Activated CD4-positive, alpha-beta T cell treated with anti-CD3 and anti-CD28 coated beads, Interleukin-2, amount 10 ng/mL, durations not matched to agents 24 days and 14 days (primary cell): ENCODE measurements at regions of chr3 and their contacts with region 1.

Region 1: DNA sequence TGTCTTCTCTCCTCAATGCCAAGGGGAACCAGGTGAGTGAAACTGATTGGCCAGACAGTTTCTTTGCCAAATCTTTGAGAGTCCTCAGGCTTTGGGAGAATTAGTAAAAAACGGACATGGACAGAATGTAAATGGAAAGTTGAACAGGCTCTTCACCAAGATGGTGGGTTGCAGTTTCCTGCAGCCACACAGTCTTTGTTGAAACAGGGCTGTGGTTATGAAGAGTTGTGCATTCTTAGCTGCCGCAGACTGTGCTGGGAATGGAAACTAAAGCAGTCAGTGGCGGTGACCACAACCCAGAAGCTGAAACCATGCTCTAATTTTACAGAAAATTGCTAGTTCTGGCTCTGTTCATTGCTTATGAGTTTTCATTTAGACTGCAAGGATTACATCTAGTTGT is 42.1 kb upstream of the TASOR start:
- DNase-seq: peak; percentile 92
- H3K4me3 Mint-ChIP-seq: peak overlapping the region; percentile 79
- H3K27ac Mint-ChIP-seq: peak overlapping the region; percentile 79
- H3K4me1 Mint-ChIP-seq: peaks cover 52% of the 10 kb centered on the region
- H3K27me3 Mint-ChIP-seq: no peaks in the 10 kb centered on the region

Region 2: GRCh38 chr3:56753206-56753820 is 28.1 kb after region 1 on chr3:
- intact Hi-C with region 1: loop called (anchors 1 kb)
- DNase-seq: peak; percentile 82
- H3K4me3 Mint-ChIP-seq: peak overlapping the region; percentile 67
- H3K27ac Mint-ChIP-seq: peak overlapping the region; percentile 80
- H3K4me1 Mint-ChIP-seq: peaks cover 62% of the 10 kb centered on the region
- H3K27me3 Mint-ChIP-seq: no peaks in the 10 kb centered on the region

Region 3: DNA sequence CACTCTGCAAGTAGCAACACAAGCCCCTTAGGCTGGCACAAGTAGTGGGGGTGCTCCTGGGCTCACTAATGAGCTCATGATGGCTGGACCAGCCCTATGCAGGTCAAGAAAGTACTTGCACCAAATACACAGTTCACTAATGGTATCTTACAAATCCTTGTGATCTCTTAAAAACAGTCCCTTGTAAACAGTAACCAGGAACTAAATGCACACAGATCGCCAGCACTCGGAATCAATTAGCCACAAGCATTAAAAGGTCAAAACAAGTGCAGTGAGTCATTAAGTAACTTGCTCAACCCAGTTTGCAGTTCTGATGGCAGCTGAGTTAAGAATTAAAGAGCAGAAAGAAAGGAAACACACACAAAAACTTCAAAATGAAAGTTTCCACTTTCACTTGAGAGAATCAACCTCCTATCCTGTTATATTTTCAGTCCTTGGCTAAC is 33.4 kb after region 1 on chr3:
- intact Hi-C with region 1: loop called (anchors 1 kb)
- DNase-seq: peak; percentile 80
- H3K4me3 Mint-ChIP-seq: peak overlapping the region; percentile 77
- H3K27ac Mint-ChIP-seq: peak overlapping the region; percentile 90
- H3K4me1 Mint-ChIP-seq: peaks cover 75% of the 10 kb centered on the region
- H3K27me3 Mint-ChIP-seq: no peaks in the 10 kb centered on the region

Region 4: GRCh38 chr3:56783644-56784447 is 58.7 kb after region 1 on chr3:
- intact Hi-C with region 1: loop called (anchors 5 kb)
- DNase-seq: peak; percentile 92
- H3K4me3 Mint-ChIP-seq: peak overlapping the region; percentile 75
- H3K27ac Mint-ChIP-seq: peak overlapping the region; percentile 95
- H3K4me1 Mint-ChIP-seq: peaks cover 87% of the 10 kb centered on the region
- H3K27me3 Mint-ChIP-seq: no peaks in the 10 kb centered on the region

Region 5: GRCh38 chr3:56790016-56790821 is 65.0 kb after region 1 on chr3:
- intact Hi-C with region 1: loop called (anchors 2 kb)
- DNase-seq: peak; percentile 80
- H3K4me3 Mint-ChIP-seq: peak overlapping the region; percentile 67
- H3K27ac Mint-ChIP-seq: peak overlapping the region; percentile 89
- H3K4me1 Mint-ChIP-seq: peaks cover 71% of the 10 kb centered on the region
- H3K27me3 Mint-ChIP-seq: no peaks in the 10 kb centered on the region

Region 6: GRCh38 chr3:58144478-58145325 is 1419.5 kb after region 1 on chr3:
- intact Hi-C with region 1: no loop called
- DNase-seq: no peak
- H3K4me3 Mint-ChIP-seq: no peak overlapping the region
- H3K27ac Mint-ChIP-seq: no peak overlapping the region
- H3K4me1 Mint-ChIP-seq: no peaks in the 10 kb centered on the region
- H3K27me3 Mint-ChIP-seq: no peaks in the 10 kb centered on the region